Left colon (tissue), 2 donors: ENCODE measurements at regions of chr1 and their contacts with region 1.

Region 1: DNA sequence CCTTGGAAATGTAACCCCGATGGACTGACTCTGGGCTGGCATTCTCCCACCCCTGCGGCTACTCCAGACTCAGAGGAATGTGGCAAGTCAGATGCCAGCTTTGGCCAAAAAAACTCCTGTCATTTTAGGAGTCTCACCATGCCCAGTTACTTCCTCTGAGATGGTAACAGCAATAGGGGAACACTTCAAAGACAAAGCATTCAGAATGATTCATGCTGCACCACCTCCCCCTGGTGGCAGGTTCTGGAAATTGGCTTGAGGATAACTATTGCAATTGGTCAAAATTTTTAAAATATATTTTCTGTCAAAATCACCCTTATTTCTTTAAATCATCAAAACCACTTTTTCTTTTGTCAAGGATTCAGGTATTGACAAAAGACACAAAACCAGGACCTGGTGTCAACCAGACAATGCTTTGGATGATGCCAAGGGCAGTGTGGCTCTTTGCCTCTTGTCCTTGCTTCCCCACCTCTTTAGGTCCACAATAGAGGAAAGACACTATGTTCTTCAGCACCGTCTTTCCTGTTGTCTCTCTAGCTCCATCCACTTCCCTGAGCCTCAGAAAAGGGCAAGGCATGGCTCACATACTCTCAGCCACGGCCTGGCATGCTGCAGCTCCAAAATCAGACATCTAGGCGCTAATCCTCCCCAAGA is 9.9 kb upstream of the CDCA8 start:
- DNase-seq: peak in 1 of 2 donors; percentile 82
- ATAC-seq: peak; percentile 75

Region 2: GRCh38 chr1:37449936-37450335 is 232.5 kb before region 1 on chr1:
- intact Hi-C with region 1: loop called in 1 of 2 experiments (anchors 10 kb)
- DNase-seq: no peak
- ATAC-seq: no peak

Region 3: DNA sequence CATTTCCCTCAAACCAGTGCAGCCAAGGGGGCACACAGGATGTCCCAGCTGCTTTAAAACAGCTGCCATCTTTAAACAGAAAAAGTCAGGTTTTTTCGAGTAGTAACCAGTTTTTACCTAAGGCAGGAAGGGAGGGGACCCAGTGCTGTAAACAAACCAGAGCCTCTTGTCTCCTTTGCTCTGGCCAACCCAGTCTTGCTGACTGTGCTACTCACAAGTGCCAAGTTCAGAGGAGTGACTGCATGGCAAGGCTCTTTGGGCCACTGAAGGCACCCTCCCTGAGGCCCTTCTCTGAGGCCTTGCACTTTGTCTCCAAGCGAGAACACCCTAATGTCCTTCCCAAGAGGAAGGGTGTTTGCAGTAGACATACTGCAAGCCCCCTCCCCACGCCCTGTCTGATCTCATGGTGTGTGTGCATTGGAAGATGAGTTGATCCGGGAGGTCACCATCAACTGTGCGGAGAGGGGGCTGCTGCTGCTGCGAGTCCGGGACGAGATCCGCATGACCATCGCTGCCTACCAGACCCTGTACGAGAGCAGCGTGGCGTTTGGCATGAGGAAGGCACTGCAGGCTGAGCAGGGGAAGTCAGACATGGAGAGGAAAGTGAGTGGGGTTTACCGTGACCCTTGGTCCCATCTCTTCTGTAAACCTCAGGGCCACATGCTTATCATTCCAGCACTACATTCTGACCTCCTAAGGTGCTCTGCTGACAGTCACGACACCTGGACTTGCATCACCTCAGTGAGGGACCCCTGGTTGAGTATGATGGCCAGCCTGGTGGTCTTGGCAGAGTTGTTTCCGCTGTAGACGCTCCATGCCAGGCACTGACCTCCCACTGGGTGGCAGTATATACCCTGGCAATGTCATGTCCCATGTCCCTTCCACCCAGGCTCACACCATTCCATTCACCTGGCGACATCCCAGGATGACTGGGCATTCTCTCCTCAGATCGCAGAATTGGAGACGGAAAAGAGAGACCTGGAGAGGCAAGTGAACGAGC is 121.0 kb before region 1 on chr1:
- intact Hi-C with region 1: loop called in 1 of 2 experiments (anchors 10 kb)
- DNase-seq: no peak
- ATAC-seq: no peak

Region 4: DNA sequence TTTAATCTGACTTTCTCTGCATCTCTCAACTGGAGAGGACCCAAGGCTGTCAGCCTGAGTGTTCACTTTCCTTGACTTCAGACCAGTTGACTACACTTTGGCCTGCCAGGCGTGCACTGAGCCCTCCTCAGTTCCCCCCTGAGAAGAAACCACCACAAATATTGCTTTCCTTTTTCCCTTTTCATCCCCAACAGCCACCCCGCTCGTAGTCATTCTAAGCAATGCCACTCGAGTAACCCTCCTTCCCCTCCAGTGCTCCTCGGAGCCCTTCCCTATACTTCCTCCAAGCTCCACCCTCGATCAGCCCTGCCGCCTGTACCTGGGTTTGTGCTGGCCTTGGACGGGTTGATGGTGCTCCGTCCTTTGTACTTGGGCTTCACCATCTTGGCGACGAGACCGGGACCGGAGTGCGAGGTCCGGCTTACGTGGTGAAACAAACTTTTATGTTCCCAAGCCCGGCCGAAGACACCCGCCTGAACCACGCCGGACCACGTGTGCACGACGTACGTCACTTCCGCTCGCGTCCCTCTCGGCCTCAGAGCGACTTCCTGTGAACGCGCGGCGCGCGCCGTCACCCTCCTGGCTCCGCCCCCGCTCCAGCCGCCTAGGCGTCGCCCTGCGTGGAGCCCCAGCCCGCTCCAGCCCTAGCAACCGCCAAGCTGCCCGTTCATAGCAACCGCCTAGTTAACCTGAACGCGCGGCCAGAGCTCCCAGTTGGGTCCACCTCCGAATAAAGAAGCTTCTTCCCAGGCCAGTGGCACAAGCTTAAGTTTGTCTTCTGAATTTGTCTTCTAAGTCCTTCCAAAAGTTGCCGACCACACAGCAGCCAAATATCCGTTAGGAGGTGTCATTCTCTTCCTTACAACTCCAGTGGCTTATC is 86.8 kb before region 1 on chr1 and contains the start of gene GNL2:
- intact Hi-C with region 1: loop called in 1 of 2 experiments (anchors 5 kb)
- DNase-seq: peak; percentile 96 to 99
- ATAC-seq: peak; percentile 100
- total RNA-seq, gene GNL2: 29.9 to 35.1 TPM